ENCODE measurements at regions of chr2 and their contacts with region 1.

Region 1: DNA sequence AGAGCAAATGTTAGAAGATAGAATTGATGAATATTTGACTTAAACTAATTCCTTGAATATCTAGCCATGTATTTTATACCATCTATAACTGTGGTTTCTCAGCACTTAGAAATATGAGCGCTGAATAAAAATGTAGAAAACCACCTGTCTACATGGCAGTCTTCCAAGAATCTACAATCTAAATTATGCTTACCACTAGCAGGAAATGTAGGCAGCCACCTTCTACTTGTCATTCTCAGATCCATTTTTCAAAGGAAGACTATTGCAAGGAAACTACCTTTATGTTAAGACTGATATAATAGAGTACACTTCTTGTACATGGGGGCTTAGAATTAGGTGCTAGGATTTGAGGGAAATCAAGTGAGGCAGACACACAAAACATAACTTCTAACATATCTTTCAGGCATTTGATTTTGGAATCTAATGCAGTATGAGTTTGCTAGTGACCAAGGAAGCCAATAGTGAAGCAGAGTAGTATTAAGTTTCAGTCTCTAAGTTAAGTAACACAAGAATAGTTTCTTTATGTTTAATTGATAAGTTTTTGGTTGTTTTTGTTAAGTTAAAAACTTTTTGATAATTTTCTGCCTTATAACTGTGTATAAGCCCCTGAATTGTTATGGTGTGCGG is 175.9 kb upstream of the ITGA4 start:
- DNase-seq: no peak
- ATAC-seq: no peak
- H3K4me3 ChIP-seq: no peak overlapping the region
- H3K27ac ChIP-seq: no peak overlapping the region
- H3K4me1 ChIP-seq: no peaks in the 10 kb centered on the region
- H3K27me3 ChIP-seq: no peaks in the 10 kb centered on the region
- CTCF ChIP-seq: no peak

Region 2: DNA sequence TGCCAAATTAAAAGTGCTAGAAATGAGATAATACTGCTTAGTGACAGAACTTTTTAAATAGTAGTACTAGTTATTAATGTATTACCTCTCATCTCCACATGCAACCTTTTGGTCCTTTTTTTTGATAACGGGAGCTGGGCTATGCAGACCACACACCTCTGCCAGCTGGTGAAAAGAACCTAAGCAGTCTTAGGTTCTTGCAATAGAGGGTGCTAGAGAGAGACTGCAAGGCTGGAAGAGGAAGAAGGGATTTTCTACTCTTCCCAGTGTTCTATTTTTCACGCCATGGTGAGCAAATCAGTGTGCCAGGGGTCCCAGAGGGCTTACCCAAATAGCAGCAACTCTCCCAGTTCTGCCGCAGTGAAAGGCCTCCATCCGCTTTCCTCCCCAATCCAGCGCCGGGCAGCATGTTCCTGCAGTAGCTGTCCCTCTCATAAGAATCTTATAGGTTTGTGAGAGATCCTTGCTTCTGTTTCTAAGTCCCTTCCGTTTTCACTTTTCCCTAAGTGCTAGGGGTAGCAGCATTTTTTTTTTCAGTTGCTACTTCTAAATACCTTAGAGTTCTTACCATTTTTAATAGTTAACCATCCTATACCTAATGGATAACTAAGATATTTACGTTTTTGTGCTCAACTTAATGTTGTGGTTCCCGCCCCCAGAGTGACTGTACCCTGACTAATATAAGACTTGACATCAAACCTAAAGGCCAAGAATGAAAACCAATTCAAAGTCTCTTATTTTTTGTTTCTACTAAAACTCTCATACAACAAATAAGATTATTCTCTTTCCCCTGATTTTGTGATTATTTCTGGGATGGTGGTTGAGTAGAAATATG is 370.3 kb before region 1 on chr2:
- intact Hi-C with region 1: loop called in 1 of 2 experiments (anchors 5 kb)
- DNase-seq: no peak
- ATAC-seq: no peak
- H3K4me3 ChIP-seq: no peak overlapping the region
- H3K27ac ChIP-seq: no peak overlapping the region
- H3K4me1 ChIP-seq: no peaks in the 10 kb centered on the region
- H3K27me3 ChIP-seq: no peaks in the 10 kb centered on the region
- CTCF ChIP-seq: no peak

Region 3: GRCh38 chr2:180938451-180938850 is 342.9 kb before region 1 on chr2:
- intact Hi-C with region 1: no loop called
- DNase-seq: no peak
- ATAC-seq: no peak
- H3K4me3 ChIP-seq: no peak overlapping the region
- H3K27ac ChIP-seq: no peak overlapping the region
- H3K4me1 ChIP-seq: no peaks in the 10 kb centered on the region
- H3K27me3 ChIP-seq: no peaks in the 10 kb centered on the region
- CTCF ChIP-seq: no peak

Region 4: GRCh38 chr2:181258720-181259119 is 22.6 kb before region 1 on chr2:
- intact Hi-C with region 1: no loop called
- DNase-seq: no peak
- ATAC-seq: no peak
- H3K4me3 ChIP-seq: no peak overlapping the region
- H3K27ac ChIP-seq: no peak overlapping the region
- H3K4me1 ChIP-seq: no peaks in the 10 kb centered on the region
- H3K27me3 ChIP-seq: no peaks in the 10 kb centered on the region
- CTCF ChIP-seq: no peak

Region 5: DNA sequence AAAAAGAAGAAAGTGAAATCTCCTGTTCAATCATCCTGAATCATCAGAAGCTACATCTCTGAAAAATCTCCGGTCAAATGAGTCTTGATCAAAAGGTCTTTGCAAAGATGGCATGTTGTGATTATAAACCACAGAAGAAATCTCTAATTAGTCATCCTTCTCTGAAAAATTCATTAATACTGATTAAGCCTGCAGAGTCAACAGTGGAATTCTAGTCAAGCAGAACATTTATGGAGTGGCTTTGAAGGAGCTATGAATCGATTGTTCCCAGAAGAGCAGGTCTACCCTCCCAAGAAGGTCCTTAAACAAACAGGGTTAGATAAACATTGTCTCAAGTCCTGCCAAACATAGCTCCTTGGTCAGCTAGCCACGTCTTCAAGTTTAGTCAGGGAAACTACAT is 264.7 kb after region 1 on chr2:
- intact Hi-C with region 1: no loop called
- DNase-seq: no peak
- ATAC-seq: no peak
- H3K4me3 ChIP-seq: no peak overlapping the region
- H3K27ac ChIP-seq: no peak overlapping the region
- H3K4me1 ChIP-seq: no peaks in the 10 kb centered on the region
- H3K27me3 ChIP-seq: peaks cover 0 to 3% (median 0%) of the 10 kb centered on the region in 3 donors
- CTCF ChIP-seq: no peak

Region 6: GRCh38 chr2:181573140-181573736 is 291.9 kb after region 1 on chr2:
- intact Hi-C with region 1: no loop called
- DNase-seq: no peak
- ATAC-seq: no peak
- H3K4me3 ChIP-seq: no peak overlapping the region
- H3K27ac ChIP-seq: no peak overlapping the region
- H3K4me1 ChIP-seq: no peaks in the 10 kb centered on the region
- H3K27me3 ChIP-seq: peaks cover 0 to 2% (median 0%) of the 10 kb centered on the region in 3 donors
- CTCF ChIP-seq: peak; percentile 14